ENCODE measurements at regions of chr18 and their contacts with region 1.

Region 1: DNA sequence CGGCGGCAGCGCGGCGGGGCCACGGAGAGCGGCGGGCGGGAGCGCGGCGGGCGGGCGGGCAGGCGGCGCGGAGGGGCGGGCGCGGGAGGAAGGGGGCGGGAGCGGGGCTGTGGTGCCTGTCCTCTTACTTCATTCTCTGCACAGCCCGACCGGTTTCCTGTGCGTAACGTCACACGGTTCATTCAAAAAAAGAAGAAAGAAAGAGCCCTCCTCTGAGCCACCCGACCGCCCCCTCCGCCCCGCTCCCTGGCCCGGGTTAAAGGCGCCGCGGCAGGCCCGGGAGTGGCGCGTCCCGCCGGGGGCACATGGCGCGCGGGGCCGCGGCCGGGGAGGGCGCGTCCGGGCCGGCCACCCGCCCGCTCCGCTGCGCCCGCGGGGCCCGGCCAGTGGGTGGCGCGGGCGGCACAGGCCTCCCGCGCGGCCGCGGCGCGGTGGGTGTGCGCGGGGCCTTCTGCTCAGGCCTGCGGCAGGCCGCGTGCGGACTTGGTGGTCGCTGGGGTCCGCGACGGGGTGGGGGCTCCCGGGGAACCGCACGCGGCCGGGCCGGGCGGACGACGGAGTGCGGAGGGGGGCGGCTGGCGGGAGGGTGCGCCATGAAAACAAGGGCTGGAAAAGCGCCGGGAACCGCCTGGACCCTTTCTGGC is 599 bp upstream of the BCL2 start:
- DNase-seq: peak; percentile 83
- H3K4me3 Mint-ChIP-seq: peak overlapping the region; percentile 90
- H3K27ac Mint-ChIP-seq: peak overlapping the region; percentile 94
- H3K4me1 Mint-ChIP-seq: peaks cover 42% of the 10 kb centered on the region
- H3K27me3 Mint-ChIP-seq: no peaks in the 10 kb centered on the region

Region 2: DNA sequence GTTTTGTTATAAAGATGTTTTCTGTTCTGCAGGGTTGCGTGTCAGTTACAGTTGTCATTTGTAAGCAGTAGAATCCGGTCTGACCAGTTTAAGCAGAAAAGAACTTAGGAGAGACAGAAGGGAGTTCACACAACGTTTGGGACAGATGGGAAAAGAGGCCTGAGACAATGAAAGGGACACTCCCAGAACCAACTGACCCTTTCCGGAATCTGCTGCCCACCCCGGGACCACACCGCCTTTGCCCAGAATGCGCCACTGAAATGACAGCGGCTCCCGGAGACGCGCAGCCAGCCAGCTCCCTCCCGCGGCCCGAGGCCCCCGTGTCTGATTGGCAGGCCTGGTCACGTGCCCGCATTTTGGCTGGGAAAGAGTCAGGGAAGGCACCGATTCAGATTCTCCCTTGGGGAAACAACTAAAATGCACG is 245.2 kb before region 1 on chr18:
- intact Hi-C with region 1: loop called (anchors 1 kb)
- DNase-seq: peak; percentile 38
- H3K4me3 Mint-ChIP-seq: peak overlapping the region; percentile 66
- H3K27ac Mint-ChIP-seq: no peak overlapping the region
- H3K4me1 Mint-ChIP-seq: peaks cover 18% of the 10 kb centered on the region
- H3K27me3 Mint-ChIP-seq: peaks cover 24% of the 10 kb centered on the region

Region 3: DNA sequence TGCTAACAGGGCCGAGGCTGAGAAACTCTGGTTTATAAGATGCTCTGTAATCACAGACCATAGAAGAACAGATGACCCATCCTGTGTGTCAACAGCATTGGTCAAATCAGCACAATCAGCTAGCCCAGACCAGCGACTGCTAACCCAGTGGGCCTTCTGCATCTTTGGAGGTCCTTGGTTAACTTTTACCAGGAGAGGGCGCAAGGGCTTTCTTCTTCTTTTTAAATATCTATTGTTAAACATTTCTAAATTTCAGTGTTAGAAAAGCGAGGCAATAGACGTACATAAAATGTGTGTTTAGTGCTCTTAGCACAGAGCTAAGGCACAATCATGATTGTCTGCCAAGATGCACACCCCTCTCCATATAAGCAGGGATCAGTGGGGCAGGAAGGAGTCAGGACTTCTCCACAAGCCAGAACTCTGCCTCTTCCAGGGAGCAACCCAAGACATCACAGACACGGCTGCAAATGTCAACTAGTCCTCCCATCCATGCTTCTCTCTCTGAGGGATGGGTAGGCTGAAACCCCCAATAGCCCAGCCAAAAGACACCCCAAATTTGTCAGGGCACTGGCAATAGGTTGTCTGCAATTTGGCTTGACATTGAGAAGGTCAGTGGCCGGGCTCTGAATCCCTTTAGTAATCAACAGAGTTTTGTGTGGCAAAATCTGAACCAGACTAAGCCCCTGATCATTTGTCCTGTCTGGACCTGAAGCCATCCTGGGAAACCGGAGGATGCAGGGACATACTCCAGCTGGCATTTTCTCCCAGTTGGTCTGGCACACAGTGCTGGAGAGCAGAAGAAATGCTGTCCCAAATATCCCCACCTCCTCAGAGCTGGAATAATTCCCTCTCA is 188.8 kb before region 1 on chr18:
- intact Hi-C with region 1: loop called (anchors 1 kb)
- DNase-seq: peak; percentile 24
- H3K4me3 Mint-ChIP-seq: no peak overlapping the region
- H3K27ac Mint-ChIP-seq: peak overlapping the region; percentile 18
- H3K4me1 Mint-ChIP-seq: peaks cover 31% of the 10 kb centered on the region
- H3K27me3 Mint-ChIP-seq: no peaks in the 10 kb centered on the region

Region 4: DNA sequence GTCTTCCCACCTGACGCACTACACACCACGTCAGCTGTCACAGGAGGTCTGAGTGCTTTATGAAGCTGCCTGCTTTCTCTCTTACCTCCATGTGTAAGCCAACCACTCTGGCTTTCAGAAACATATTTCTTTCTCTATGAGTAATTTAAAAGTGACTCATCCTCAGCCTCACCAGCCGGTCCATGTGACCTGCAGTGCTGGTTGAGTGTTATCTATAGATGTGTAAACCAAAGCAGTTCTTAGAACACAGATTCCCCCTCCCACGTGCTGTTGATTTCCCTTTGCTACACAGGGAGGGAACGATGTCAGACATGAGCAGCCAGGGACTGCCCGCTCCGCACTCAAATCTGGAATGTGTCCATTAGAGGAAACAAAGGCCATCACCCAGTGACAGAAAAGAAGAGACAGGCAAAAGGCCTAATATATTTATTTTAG is 158.4 kb before region 1 on chr18:
- intact Hi-C with region 1: loop called (anchors 1 kb)
- DNase-seq: peak; percentile 80
- H3K4me3 Mint-ChIP-seq: peak overlapping the region; percentile 83
- H3K27ac Mint-ChIP-seq: peak overlapping the region; percentile 99
- H3K4me1 Mint-ChIP-seq: peaks cover 92% of the 10 kb centered on the region
- H3K27me3 Mint-ChIP-seq: no peaks in the 10 kb centered on the region

Region 5: DNA sequence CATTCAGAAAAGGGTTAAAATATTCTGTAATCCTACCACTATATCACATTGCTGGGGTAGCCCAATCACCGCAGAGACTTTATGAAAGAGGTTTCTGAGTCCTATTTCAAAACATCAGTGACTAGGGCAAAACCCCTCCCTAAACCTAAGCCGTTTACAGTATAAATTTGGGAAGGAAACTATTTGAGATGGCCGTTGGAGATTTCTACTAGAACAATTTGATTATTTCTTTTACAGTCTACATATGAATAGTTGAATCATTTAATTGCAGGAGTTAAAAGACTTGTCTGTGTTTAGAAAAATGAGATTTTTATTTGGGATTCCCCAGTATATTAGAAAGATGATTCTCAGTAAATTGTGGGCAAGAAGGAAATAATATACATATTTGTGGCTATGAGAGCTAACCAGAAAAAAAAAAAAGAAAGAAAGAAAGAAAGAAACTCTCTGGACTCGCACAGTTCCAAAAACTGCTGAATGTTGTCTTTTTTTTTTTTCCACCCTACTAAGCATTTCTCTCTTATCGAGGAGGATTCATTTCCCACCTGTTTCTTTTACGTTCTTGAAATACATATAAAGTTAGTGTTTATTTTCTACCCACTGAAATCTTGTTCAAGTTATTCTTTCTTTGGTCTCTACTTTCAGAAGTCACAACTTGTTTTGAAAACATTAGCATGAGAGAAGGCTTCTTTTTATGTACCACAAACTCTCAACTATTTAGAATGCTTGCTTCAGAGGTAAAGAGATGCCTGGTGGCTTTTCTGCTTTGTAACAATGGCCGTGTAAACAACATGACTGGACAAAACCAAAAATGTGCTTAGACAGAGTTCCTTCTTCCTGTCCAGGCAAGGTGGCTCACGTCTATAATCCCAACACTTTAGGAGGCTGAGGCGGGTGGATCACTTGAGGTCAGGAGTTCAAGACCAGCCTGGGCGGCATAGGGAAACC is 66.5 kb before region 1 on chr18:
- intact Hi-C with region 1: loop called (anchors 2 kb)
- DNase-seq: no peak
- H3K4me3 Mint-ChIP-seq: no peak overlapping the region
- H3K27ac Mint-ChIP-seq: peak overlapping the region; percentile 79
- H3K4me1 Mint-ChIP-seq: peaks cover 78% of the 10 kb centered on the region
- H3K27me3 Mint-ChIP-seq: no peaks in the 10 kb centered on the region

Region 6: DNA sequence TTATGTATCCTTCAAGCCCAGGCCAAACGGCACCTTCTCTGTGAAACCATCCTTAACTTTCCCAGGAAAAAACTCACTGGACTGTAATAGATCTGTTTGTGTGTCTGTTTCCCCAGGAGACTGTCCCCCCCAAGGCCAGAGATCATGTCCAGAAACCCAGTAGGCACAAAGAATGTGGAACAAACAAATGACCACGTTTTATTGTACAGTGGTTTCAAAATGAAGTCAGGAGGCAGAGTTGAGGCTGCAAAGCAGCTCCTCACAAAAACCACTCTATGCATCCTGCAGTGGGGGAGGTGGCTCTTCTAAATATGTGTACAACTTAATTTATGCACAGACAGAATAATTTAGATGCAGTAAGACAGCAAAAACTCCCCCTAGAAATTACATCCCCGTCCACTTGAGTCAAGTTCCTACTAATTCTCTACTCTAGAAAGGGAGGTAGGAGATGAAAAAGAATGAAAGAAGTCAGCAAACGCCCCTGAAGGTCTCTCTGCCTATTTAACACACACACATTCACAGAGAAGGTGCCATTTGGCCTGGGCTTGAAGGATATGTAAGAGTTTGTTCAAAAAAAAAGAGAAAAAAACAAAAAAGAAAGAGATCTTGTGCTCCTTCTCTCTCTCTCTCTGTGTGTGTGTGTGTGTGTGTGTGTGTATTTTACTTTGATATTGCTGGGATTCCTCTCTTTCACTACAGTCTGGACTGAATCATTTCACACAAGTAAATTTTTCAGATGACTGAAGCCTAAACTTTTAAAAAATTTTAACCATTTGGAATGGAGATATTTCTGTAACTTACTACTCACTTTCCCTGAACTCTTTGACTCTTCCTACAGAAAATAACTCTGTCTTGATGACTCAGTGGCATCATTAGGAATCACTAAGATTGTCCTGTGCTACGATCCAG is 20.1 kb before region 1 on chr18:
- intact Hi-C with region 1: loop called (anchors 1 kb)
- DNase-seq: no peak
- H3K4me3 Mint-ChIP-seq: peak overlapping the region; percentile 76
- H3K27ac Mint-ChIP-seq: peak overlapping the region; percentile 96
- H3K4me1 Mint-ChIP-seq: peaks cover 91% of the 10 kb centered on the region
- H3K27me3 Mint-ChIP-seq: no peaks in the 10 kb centered on the region

Region 7: GRCh38 chr18:63439334-63439733 is 119.2 kb after region 1 on chr18:
- intact Hi-C with region 1: loop called (anchors 1 kb)
- DNase-seq: peak; percentile 19
- H3K4me3 Mint-ChIP-seq: no peak overlapping the region
- H3K27ac Mint-ChIP-seq: no peak overlapping the region
- H3K4me1 Mint-ChIP-seq: peaks cover 6% of the 10 kb centered on the region
- H3K27me3 Mint-ChIP-seq: peaks cover 23% of the 10 kb centered on the region

Region 8: GRCh38 chr18:63454497-63454896 is 134.3 kb after region 1 on chr18:
- intact Hi-C with region 1: no loop called
- DNase-seq: no peak
- H3K4me3 Mint-ChIP-seq: no peak overlapping the region
- H3K27ac Mint-ChIP-seq: no peak overlapping the region
- H3K4me1 Mint-ChIP-seq: peaks cover 6% of the 10 kb centered on the region
- H3K27me3 Mint-ChIP-seq: peaks cover 8% of the 10 kb centered on the region

Region 9: GRCh38 chr18:63578357-63578958 is 258.3 kb after region 1 on chr18:
- intact Hi-C with region 1: no loop called
- DNase-seq: no peak
- H3K4me3 Mint-ChIP-seq: no peak overlapping the region
- H3K27ac Mint-ChIP-seq: no peak overlapping the region
- H3K4me1 Mint-ChIP-seq: no peaks in the 10 kb centered on the region
- H3K27me3 Mint-ChIP-seq: peaks cover 18% of the 10 kb centered on the region

Region 10: DNA sequence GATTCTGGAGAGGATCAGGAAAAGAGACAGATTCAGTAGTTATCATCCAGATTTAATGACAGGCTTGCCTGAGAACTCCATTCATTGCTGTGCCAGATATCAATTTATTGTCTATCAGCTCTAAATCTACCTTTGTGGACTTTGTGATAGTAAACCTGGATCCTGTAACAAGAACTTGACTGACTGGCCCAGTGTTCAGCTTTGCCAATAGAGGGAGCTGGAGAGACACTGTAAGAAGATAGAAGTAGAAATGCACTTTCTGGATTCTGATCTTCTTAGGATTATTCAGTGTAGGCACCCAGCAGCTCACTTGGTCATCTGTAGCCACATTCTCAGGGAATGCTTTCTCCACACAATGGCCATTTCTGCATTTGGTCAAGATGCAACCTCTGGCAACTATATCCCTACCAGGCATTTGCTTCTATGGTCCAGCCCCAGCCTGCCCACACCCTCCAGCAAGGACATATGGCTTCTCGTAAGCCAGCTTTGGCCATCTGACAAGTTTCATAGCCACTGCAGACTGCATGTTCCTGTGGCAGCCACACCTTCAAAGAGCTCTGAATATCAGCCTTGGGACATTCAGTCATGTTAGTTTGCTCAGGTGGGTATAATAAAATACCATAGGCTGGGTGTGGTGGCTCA is 643.6 kb after region 1 on chr18:
- intact Hi-C with region 1: no loop called
- DNase-seq: peak; percentile 13
- H3K4me3 Mint-ChIP-seq: no peak overlapping the region
- H3K27ac Mint-ChIP-seq: no peak overlapping the region
- H3K4me1 Mint-ChIP-seq: peaks cover 21% of the 10 kb centered on the region
- H3K27me3 Mint-ChIP-seq: no peaks in the 10 kb centered on the region